SK-N-SH (cell line): ENCODE measurements at regions of chr10 and their contacts with region 1.

Region 1: GRCh38 chr10:7687228-7687907 is 15.7 kb upstream of the ITIH2 start:
- DNase-seq: peak; percentile 78
- H3K4me3 ChIP-seq: peak overlapping the region in 1 of 2 experiments; percentile 48; a peak in 1 of 4 replicates
- H3K27ac ChIP-seq: no peak overlapping the region
- H3K4me1 ChIP-seq: no peaks in the 10 kb centered on the region
- H3K27me3 ChIP-seq: no peaks in the 10 kb centered on the region
- CTCF ChIP-seq: peak; percentile 80
- EP300 ChIP-seq: no peak
- RAD21 ChIP-seq: peak; percentile 91

Region 2: GRCh38 chr10:7471720-7472367 is 215.5 kb before region 1 on chr10:
- CTCF ChIA-PET with region 1: no interaction called
- POLR2A ChIA-PET with region 1: no interaction called
- DNase-seq: no peak
- H3K4me3 ChIP-seq: no peak overlapping the region
- H3K27ac ChIP-seq: no peak overlapping the region
- H3K4me1 ChIP-seq: peaks cover 0 to 8% of the 10 kb centered on the region in 2 experiments; a peak in 1 of 4 replicates
- H3K27me3 ChIP-seq: no peaks in the 10 kb centered on the region
- CTCF ChIP-seq: no peak
- EP300 ChIP-seq: no peak
- RAD21 ChIP-seq: no peak

Region 3: GRCh38 chr10:7525314-7526016 is 161.9 kb before region 1 on chr10:
- CTCF ChIA-PET with region 1: interaction called, 152 read pairs
- POLR2A ChIA-PET with region 1: interaction called, 3 read pairs
- DNase-seq: peak; percentile 83
- H3K4me3 ChIP-seq: peak overlapping the region in 1 of 2 experiments; percentile 33; a peak in 1 of 4 replicates
- H3K27ac ChIP-seq: no peak overlapping the region
- H3K4me1 ChIP-seq: peaks cover 0 to 3% of the 10 kb centered on the region in 2 experiments; a peak in 1 of 4 replicates
- H3K27me3 ChIP-seq: no peaks in the 10 kb centered on the region
- CTCF ChIP-seq: peak; percentile 83
- EP300 ChIP-seq: no peak
- RAD21 ChIP-seq: peak; percentile 95

Region 4: DNA sequence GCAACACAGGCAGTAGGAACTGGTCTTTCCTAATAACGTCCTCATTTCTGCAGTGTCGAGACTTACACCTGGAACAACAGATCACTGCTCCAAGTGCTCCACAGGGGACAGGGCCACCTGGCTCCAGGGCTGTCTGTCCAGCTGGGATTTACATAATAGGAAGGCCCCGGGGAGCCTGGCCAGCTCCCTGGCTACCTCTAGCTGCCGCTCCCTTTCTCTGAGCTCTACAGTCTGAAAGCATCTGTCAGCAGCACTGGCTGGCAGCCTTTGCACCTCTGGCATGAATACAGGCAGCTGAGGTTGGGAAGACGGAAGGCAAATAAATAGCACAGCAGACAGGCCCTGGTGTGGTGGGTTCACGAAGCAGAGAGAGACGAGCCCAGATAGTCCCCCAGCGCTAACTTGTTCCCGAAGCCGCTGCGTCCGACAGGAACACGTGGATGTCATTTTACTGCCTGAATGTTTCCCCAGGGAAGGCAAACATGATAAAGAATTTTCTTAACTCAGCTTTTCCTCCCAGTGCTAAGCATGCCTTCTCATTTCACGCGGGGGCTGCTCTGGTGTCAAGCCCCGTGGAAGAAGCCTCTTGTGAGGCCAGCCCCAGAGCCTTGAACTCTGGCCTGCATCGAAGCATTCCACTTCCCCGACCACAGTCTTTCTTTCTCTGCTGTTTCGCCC is 126.0 kb before region 1 on chr10:
- CTCF ChIA-PET with region 1: interaction called, 18 read pairs
- POLR2A ChIA-PET with region 1: no interaction called
- DNase-seq: no peak
- H3K4me3 ChIP-seq: no peak overlapping the region
- H3K27ac ChIP-seq: no peak overlapping the region
- H3K4me1 ChIP-seq: no peaks in the 10 kb centered on the region; a peak in 1 of 4 replicates
- H3K27me3 ChIP-seq: no peaks in the 10 kb centered on the region
- CTCF ChIP-seq: no peak
- EP300 ChIP-seq: no peak
- RAD21 ChIP-seq: no peak

Region 5: GRCh38 chr10:7593704-7594304 is 93.6 kb before region 1 on chr10:
- CTCF ChIA-PET with region 1: no interaction called
- POLR2A ChIA-PET with region 1: no interaction called
- DNase-seq: no peak
- H3K4me3 ChIP-seq: no peak overlapping the region
- H3K27ac ChIP-seq: no peak overlapping the region
- H3K4me1 ChIP-seq: no peaks in the 10 kb centered on the region
- H3K27me3 ChIP-seq: no peaks in the 10 kb centered on the region
- CTCF ChIP-seq: no peak
- EP300 ChIP-seq: no peak
- RAD21 ChIP-seq: no peak

Region 6: DNA sequence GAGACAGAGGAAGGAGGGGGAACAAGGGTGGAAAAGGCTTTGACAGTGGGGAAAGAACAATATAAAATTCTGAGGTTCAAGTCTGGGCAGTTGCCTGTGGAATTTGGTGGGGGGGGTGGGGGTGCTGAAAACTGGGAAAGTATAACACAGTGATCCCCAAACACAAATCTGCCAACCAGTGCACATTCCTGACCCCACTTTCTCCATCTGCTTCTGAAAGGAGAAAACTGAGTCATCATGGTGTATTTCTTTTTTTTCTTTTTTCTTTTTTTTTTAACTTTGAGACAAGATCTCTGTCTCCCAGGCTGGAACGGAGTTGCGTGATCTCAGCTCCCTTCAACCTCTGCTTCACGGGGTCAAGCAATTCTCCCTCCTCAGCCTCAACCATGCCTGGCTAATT is 16.2 kb before region 1 on chr10:
- CTCF ChIA-PET with region 1: interaction called, 26 read pairs
- POLR2A ChIA-PET with region 1: no interaction called
- DNase-seq: no peak
- H3K4me3 ChIP-seq: no peak overlapping the region
- H3K27ac ChIP-seq: no peak overlapping the region
- H3K4me1 ChIP-seq: peaks cover 0 to 5% of the 10 kb centered on the region in 2 experiments; a peak in 1 of 4 replicates
- H3K27me3 ChIP-seq: peaks cover 6% of the 10 kb centered on the region; the same call in 1 of the 2 replicates
- CTCF ChIP-seq: no peak
- EP300 ChIP-seq: no peak
- RAD21 ChIP-seq: no peak

Region 7: GRCh38 chr10:7707102-7707501 is 19.7 kb after region 1 on chr10:
- CTCF ChIA-PET with region 1: interaction called, 17 read pairs
- POLR2A ChIA-PET with region 1: no interaction called
- DNase-seq: no peak
- H3K4me3 ChIP-seq: no peak overlapping the region
- H3K27ac ChIP-seq: no peak overlapping the region
- H3K4me1 ChIP-seq: no peaks in the 10 kb centered on the region
- H3K27me3 ChIP-seq: no peaks in the 10 kb centered on the region
- CTCF ChIP-seq: no peak
- EP300 ChIP-seq: no peak
- RAD21 ChIP-seq: no peak

Region 8: DNA sequence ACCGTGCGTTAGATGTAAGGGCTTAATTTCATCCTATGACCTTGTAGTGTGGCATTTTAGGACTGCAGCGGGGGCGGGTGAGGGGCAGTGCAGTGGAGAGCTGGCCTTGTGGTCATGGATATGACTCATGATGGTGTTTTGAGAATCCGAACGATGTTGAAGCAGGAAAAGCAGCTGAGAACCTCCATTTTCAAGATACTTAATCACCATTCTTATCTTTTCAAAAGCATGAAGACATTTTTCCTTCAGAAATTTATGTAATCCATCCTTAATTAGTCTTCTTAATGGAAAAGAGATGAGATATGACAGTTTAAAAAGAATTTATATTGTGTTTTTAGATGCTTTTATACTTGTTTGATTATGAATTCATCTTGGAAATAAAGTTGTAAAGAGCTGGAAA is 110.2 kb after region 1 on chr10:
- CTCF ChIA-PET with region 1: no interaction called
- POLR2A ChIA-PET with region 1: no interaction called
- DNase-seq: peak; percentile 17
- H3K4me3 ChIP-seq: peak overlapping the region in 1 of 2 experiments; percentile 0; a peak in 1 of 4 replicates
- H3K27ac ChIP-seq: peak overlapping the region; percentile 13 to 88; a peak in 3 of 4 replicates
- H3K4me1 ChIP-seq: peaks cover 0 to 18% of the 10 kb centered on the region in 2 experiments
- H3K27me3 ChIP-seq: no peaks in the 10 kb centered on the region
- CTCF ChIP-seq: no peak
- EP300 ChIP-seq: peak in 1 of 2 experiments; percentile 81; a peak in 1 of 4 replicates
- RAD21 ChIP-seq: no peak

Region 9: DNA sequence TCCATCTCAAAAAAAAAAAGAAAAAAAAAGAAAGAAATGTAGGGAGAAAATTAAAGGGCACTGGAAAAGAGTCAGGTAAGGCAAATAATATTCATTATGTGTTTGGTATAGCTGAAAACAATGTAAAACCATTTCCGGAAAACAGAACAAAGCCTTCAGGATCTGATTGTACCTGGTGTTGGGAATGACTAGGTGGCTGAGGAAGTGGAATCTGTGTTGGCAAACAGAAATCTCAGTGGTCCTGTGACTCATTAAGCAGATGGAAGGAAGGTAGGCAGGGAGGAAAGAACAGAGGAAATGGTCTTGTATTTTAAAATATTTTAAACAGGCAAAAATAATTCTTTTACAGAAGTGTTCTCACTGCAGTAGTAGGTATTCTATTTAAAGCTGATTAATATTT is 311.5 kb after region 1 on chr10:
- CTCF ChIA-PET with region 1: no interaction called
- POLR2A ChIA-PET with region 1: no interaction called
- DNase-seq: no peak
- H3K4me3 ChIP-seq: no peak overlapping the region
- H3K27ac ChIP-seq: no peak overlapping the region
- H3K4me1 ChIP-seq: no peaks in the 10 kb centered on the region
- H3K27me3 ChIP-seq: no peaks in the 10 kb centered on the region
- CTCF ChIP-seq: no peak
- EP300 ChIP-seq: no peak
- RAD21 ChIP-seq: no peak